Tibial artery (tissue), 4 donors: ENCODE measurements at regions of chr18 and their contacts with region 1.

Region 1: GRCh38 chr18:58043491-58044379 is at the start of gene NEDD4L:
- DNase-seq: peak; percentile 78 to 88
- H3K4me3 ChIP-seq: peak within 1 kb of the TSS; percentile 57 to 74
- H3K27ac ChIP-seq: peak within 1 kb of the TSS in 1 of 2 donors; percentile 34
- H3K4me1 ChIP-seq: peaks cover 0 to 39% (median 18%) of the 10 kb centered on the region in 4 donors
- H3K27me3 ChIP-seq: no peaks in the 10 kb centered on the region
- CTCF ChIP-seq: peak; percentile 56 to 89

Region 2: GRCh38 chr18:58119819-58120218 is 76.1 kb after region 1 on chr18:
- intact Hi-C with region 1: loop called (anchors 2 kb)
- DNase-seq: no peak
- H3K4me3 ChIP-seq: no peak overlapping the region
- H3K27ac ChIP-seq: no peak overlapping the region
- H3K4me1 ChIP-seq: no peaks in the 10 kb centered on the region
- H3K27me3 ChIP-seq: no peaks in the 10 kb centered on the region
- CTCF ChIP-seq: no peak

Region 3: DNA sequence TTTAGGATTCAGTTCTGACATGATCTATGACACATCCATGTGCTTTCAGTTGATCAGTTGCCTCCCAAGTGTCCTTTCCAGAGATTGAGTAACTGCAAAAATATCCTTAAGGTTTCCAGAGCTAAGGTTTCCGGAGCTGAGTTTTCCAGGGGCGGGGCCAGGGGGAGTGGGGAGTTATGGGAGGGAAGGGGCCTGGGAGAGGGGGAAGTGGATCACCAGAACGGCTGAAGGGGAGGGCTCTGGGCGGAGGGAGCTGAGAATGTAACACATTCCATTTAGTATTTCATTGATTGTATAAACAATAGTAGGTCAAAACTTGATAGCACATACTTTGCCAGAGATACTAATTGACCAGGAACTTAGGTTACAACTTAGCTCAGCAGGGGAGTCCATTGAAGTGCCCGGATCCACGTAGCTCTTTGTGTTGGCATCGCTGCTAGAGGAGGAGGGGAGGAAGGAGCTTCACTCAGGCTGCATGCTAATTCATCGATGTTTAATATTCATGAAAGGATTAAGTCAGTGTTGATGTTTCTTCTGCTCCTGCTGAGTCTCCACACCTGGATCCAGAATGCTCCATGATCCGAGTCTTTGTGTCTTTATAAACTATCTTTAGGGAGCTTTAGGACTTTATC is 295.3 kb after region 1 on chr18:
- intact Hi-C with region 1: no loop called
- DNase-seq: no peak
- H3K4me3 ChIP-seq: no peak overlapping the region
- H3K27ac ChIP-seq: no peak overlapping the region
- H3K4me1 ChIP-seq: no peaks in the 10 kb centered on the region
- H3K27me3 ChIP-seq: no peaks in the 10 kb centered on the region
- CTCF ChIP-seq: no peak